ENCODE measurements at regions of chr4 and their contacts with region 1.

Region 1: GRCh38 chr4:47926639-47927258 is 12.4 kb upstream of the NFXL1 start:
- H3K4me3 Mint-ChIP-seq: no peak overlapping the region
- H3K27ac Mint-ChIP-seq: no peak overlapping the region
- H3K4me1 Mint-ChIP-seq: peaks cover 40% of the 10 kb centered on the region
- H3K27me3 Mint-ChIP-seq: peaks cover 2% of the 10 kb centered on the region

Region 2: GRCh38 chr4:47836641-47837093 is 90.1 kb before region 1 on chr4:
- intact Hi-C with region 1: loop called (anchors 5 kb)
- H3K4me3 Mint-ChIP-seq: peak overlapping the region; percentile 70
- H3K27ac Mint-ChIP-seq: peak overlapping the region; percentile 17
- H3K4me1 Mint-ChIP-seq: peaks cover 37% of the 10 kb centered on the region
- H3K27me3 Mint-ChIP-seq: peaks cover 30% of the 10 kb centered on the region

Region 3: DNA sequence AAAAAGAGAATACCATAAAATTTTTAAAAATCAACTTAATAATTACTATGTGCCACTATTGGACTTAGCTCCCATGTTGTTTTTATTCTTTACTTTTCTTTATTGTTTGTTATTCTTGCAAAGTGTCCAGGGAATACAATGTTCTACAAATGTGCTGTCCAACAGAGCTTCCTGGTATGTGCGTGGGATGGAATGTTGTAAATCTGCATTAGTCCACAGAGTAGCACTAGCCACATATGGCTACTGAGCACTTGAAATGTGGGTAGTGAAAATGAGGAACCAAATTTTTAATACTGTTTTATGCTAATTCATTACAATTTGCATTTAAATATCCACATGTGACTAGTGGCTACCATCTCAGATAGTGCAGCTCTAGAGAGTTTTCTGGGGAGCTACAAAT is 74.6 kb before region 1 on chr4:
- intact Hi-C with region 1: no loop called
- H3K4me3 Mint-ChIP-seq: no peak overlapping the region
- H3K27ac Mint-ChIP-seq: no peak overlapping the region
- H3K4me1 Mint-ChIP-seq: no peaks in the 10 kb centered on the region
- H3K27me3 Mint-ChIP-seq: no peaks in the 10 kb centered on the region